Mucosa of descending colon (tissue), 3 donors: ENCODE measurements at regions of chr14 and their contacts with region 1.

Region 1: GRCh38 chr14:58501214-58501816 is 73.8 kb downstream of the KIAA0586 start:
- DNase-seq: peak in 1 of 3 donors; percentile 21
- ATAC-seq: peak; percentile 73
- H3K4me3 ChIP-seq: no peak overlapping the region
- H3K4me1 ChIP-seq: no peaks in the 10 kb centered on the region
- CTCF ChIP-seq: peak; percentile 59

Region 2: GRCh38 chr14:59044707-59045106 is 543.4 kb after region 1 on chr14:
- intact Hi-C with region 1: loop called in 1 of 2 experiments (anchors 10 kb)
- DNase-seq: no peak
- ATAC-seq: no peak
- H3K4me3 ChIP-seq: no peak overlapping the region
- H3K4me1 ChIP-seq: no peaks in the 10 kb centered on the region
- CTCF ChIP-seq: no peak

Region 3: DNA sequence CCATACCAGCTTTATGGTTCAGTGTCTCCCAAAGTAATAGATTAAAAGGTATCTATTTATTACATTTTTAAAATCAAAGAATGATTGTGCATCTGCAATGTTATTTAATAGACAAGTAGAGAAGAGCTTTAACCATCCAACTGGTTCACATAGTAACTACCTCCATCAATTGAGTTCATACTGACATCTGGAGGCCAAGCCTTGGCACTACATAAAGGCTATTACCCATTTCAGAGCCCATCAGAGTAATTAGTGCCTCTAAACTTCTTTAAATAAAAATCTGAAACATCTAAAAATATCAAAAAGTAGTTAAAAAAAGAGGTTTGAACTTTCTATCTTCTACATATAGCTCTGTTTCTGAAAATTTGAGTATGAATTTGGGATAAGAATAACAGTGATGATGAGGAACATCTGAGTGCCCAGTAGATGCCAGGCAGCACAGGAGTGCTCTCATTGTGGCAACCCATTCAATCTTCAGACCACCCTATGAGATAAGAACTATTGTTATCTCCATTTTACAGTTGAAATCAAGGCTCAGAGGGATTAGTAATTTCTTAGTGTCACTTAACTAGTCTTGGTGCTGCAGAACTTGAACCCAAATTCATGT is 554.2 kb after region 1 on chr14:
- intact Hi-C with region 1: loop called in 1 of 2 experiments (anchors 10 kb)
- DNase-seq: peak in 1 of 3 donors; percentile 67
- ATAC-seq: peak; percentile 67
- H3K4me3 ChIP-seq: no peak overlapping the region
- H3K4me1 ChIP-seq: no peaks in the 10 kb centered on the region
- CTCF ChIP-seq: peak; percentile 56